CD4-positive, alpha-beta T cell (primary cell): ENCODE measurements at regions of chr3 and their contacts with region 1.

Region 1: GRCh38 chr3:44761424-44762169 is at the starts of genes KIAA1143 and KIF15:
- DNase-seq: peak; percentile 92 to 99 (median 96)
- ATAC-seq: peak; percentile 98
- H3K4me3 ChIP-seq: peak within 1 kb of the TSS; percentile 73
- H3K4me3 Mint-ChIP-seq: peak within 1 kb of the TSS; percentile 99
- H3K27ac ChIP-seq: peak within 1 kb of the TSS; percentile 72 to 76
- H3K27ac Mint-ChIP-seq: peak within 1 kb of the TSS; percentile 94
- H3K4me1 ChIP-seq: peaks cover 16% of the 10 kb centered on the region
- H3K4me1 Mint-ChIP-seq: peaks cover 39% of the 10 kb centered on the region
- H3K27me3 ChIP-seq: no peaks in the 10 kb centered on the region
- H3K27me3 Mint-ChIP-seq: no peaks in the 10 kb centered on the region
- CTCF ChIP-seq: no peak
- total RNA-seq, gene KIAA1143: 24.4 to 31.7 TPM
- total RNA-seq, gene KIF15: 0.08 to 0.11 TPM

Region 2: DNA sequence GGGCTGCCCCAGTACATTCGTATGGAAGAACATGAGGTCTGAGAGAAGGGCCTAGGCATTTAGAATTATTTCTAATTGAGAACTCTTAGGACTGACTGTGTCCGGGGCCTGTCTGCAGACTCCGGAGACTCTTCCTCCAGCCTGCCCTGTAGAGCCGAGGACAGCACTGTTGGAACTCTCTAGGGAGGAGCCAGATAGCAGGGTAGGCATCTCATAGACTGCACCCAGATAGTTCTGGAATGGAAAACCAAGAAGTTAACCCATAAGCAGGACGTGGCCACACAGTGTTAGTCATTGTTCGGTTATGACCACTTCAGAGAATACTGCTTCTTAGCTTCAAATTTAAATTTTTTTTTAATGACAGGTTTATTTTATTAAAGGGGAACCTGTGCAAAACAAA is 1415.7 kb before region 1 on chr3:
- CTCF ChIA-PET with region 1: no interaction called
- POLR2A ChIA-PET with region 1: no interaction called
- intact Hi-C with region 1: no loop called
- DNase-seq: no peak
- ATAC-seq: no peak
- H3K4me3 ChIP-seq: no peak overlapping the region
- H3K4me3 Mint-ChIP-seq: peak overlapping the region; percentile 58
- H3K27ac ChIP-seq: peak overlapping the region; percentile 36 to 62
- H3K27ac Mint-ChIP-seq: peak overlapping the region; percentile 96
- H3K4me1 ChIP-seq: peaks cover 71% of the 10 kb centered on the region
- H3K4me1 Mint-ChIP-seq: peaks cover 91% of the 10 kb centered on the region
- H3K27me3 ChIP-seq: no peaks in the 10 kb centered on the region
- H3K27me3 Mint-ChIP-seq: no peaks in the 10 kb centered on the region
- CTCF ChIP-seq: no peak

Region 3: DNA sequence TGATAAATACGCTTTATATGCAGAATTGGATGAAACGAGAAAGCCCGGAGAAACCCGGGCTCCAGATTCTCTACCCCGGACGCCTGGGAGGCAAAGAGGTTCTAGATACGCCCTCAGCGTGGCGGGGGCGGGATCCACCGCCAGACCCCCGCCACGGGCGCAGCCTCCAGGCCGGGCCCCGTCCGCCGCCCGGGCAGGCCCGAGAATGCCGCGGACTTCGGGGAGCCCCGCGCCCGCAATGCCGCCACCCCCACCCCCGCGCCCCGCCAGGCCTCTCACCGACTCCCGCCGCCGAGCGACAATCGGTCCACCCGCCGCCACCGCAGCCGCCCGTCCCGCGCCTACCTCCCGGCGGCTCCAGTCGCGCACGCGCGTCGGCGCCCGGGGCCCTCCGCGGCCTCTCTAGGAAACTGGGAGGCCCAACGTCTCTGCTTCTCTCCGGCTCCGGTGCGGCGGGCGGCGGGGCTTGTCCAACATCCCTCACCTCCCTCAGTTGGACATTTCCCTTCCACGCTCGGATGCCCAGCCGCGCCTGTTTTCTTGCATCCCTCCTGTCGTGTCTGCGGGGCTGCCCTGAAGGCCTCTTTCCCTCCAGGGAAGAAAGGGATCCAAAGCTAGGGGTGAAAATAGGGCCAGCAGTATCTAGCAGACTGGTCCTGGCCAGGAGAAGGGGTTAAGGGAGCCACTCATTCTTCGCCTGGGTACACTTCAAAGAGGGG is 284.1 kb before region 1 on chr3 and contains the start of gene ZNF445:
- CTCF ChIA-PET with region 1: no interaction called
- POLR2A ChIA-PET with region 1: no interaction called
- intact Hi-C with region 1: loop called in 1 of 2 experiments (anchors 2 kb)
- DNase-seq: peak; percentile 53 to 90 (median 72)
- ATAC-seq: peak; percentile 87
- H3K4me3 ChIP-seq: peak within 1 kb of the TSS; percentile 65
- H3K4me3 Mint-ChIP-seq: peak within 1 kb of the TSS; percentile 97
- H3K27ac ChIP-seq: peak within 1 kb of the TSS in 1 of 2 donors; percentile 56
- H3K27ac Mint-ChIP-seq: peak within 1 kb of the TSS; percentile 93
- H3K4me1 ChIP-seq: peaks cover 19% of the 10 kb centered on the region
- H3K4me1 Mint-ChIP-seq: peaks cover 39% of the 10 kb centered on the region
- H3K27me3 ChIP-seq: no peaks in the 10 kb centered on the region
- H3K27me3 Mint-ChIP-seq: no peaks in the 10 kb centered on the region
- CTCF ChIP-seq: no peak
- total RNA-seq, gene ZNF445: 6.1 to 6.6 TPM

Region 4: GRCh38 chr3:44712455-44713075 is 49.0 kb before region 1 on chr3 and contains the start of gene ZNF502:
- CTCF ChIA-PET with region 1: no interaction called
- POLR2A ChIA-PET with region 1: interaction called, 15 read pairs
- intact Hi-C with region 1: loop called in 1 of 2 experiments (anchors 5 kb)
- DNase-seq: peak; percentile 3 to 77 (median 43)
- ATAC-seq: peak; percentile 79
- H3K4me3 ChIP-seq: peak within 1 kb of the TSS; percentile 89
- H3K4me3 Mint-ChIP-seq: peak within 1 kb of the TSS; percentile 92
- H3K27ac ChIP-seq: peak within 1 kb of the TSS in 1 of 2 donors; percentile 48
- H3K27ac Mint-ChIP-seq: peak within 1 kb of the TSS; percentile 16
- H3K4me1 ChIP-seq: peaks cover 13% of the 10 kb centered on the region
- H3K4me1 Mint-ChIP-seq: peaks cover 18% of the 10 kb centered on the region
- H3K27me3 ChIP-seq: peaks cover 0 to 4% of the 10 kb centered on the region in 2 experiments
- H3K27me3 Mint-ChIP-seq: peaks cover 38% of the 10 kb centered on the region
- CTCF ChIP-seq: no peak
- total RNA-seq, gene ZNF502: 1.9 to 2.7 TPM

Region 5: GRCh38 chr3:44861412-44862220 is 100.0 kb after region 1 on chr3 and contains the start of gene TMEM42:
- CTCF ChIA-PET with region 1: no interaction called
- POLR2A ChIA-PET with region 1: no interaction called
- intact Hi-C with region 1: loop called in 1 of 2 experiments (anchors 1 kb)
- DNase-seq: peak; percentile 72 to 95 (median 82)
- ATAC-seq: peak; percentile 91
- H3K4me3 ChIP-seq: peak within 1 kb of the TSS; percentile 76
- H3K4me3 Mint-ChIP-seq: peak within 1 kb of the TSS; percentile 91
- H3K27ac ChIP-seq: peak within 1 kb of the TSS; percentile 72 to 80
- H3K27ac Mint-ChIP-seq: peak within 1 kb of the TSS; percentile 88
- H3K4me1 ChIP-seq: peaks cover 42% of the 10 kb centered on the region
- H3K4me1 Mint-ChIP-seq: peaks cover 48% of the 10 kb centered on the region
- H3K27me3 ChIP-seq: no peaks in the 10 kb centered on the region
- H3K27me3 Mint-ChIP-seq: no peaks in the 10 kb centered on the region
- CTCF ChIP-seq: no peak
- total RNA-seq, gene TMEM42: 6.8 to 8.0 TPM